Right ventricle myocardium inferior (tissue), 1 donor: ENCODE measurements at regions of chr13 and their contacts with region 1.

Region 1: GRCh38 chr13:44969551-44970484 is 19.5 kb downstream of the NUFIP1 start:
- DNase-seq: no peak
- ATAC-seq: peak; percentile 60

Region 2: DNA sequence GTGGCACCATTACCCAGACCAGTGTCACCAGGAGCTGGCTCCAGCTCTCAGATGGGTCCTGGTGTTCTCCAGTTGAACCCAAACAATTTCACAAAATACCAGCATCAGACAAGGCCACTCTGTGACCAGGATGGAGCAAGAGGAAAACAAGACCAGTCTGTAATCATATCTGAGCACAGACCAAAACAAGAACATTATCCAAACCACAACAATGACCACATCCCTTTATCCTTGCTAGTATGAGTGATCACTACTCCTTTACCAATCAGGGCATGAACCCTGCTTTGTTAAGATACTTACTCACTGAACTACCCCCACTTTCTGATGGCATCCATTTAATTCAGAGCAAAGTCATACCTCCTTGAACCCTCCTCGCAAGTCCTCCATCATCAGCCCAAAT is 126.4 kb before region 1 on chr13:
- intact Hi-C with region 1: no loop called
- DNase-seq: no peak
- ATAC-seq: no peak

Region 3: GRCh38 chr13:44917589-44918325 is 52.1 kb before region 1 on chr13:
- intact Hi-C with region 1: loop called (anchors 2 kb)
- DNase-seq: peak; percentile 95
- ATAC-seq: peak; percentile 91

Region 4: GRCh38 chr13:45310341-45311125 is 340.7 kb after region 1 on chr13:
- intact Hi-C with region 1: loop called (anchors 5 kb)
- DNase-seq: no peak
- ATAC-seq: no peak